ENCODE measurements at regions of chr7 and their contacts with region 1.

Region 1: GRCh38 chr7:22255834-22256233 is 101.1 kb downstream of the RAPGEF5 start:
- DNase-seq: no peak
- H3K4me3 ChIP-seq: no peak overlapping the region
- H3K27ac ChIP-seq: no peak overlapping the region
- H3K4me1 ChIP-seq: no peaks in the 10 kb centered on the region
- H3K27me3 ChIP-seq: no peaks in the 10 kb centered on the region
- CTCF ChIP-seq: no peak
- POLR2A ChIP-seq: no peak

Region 2: DNA sequence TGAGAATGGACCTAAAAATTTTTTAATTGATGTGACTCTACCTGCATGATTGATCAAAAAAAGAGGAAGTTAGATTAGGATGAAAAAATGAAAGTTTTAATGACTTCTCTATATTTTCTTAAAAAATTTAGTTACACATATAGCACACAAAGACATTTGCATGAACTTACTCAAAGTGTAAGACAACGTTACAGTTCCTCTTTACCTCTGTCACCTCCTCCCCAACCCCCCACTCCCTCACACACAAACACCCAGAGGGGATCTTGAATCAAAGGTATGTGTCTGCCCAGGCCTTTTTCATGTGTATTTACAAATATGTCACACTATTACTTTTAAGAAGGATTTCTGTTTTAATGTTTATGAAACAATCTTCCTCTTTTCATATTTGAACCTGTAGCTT is 289.6 kb before region 1 on chr7:
- intact Hi-C with region 1: no loop called
- DNase-seq: no peak
- H3K4me3 ChIP-seq: no peak overlapping the region
- H3K27ac ChIP-seq: no peak overlapping the region
- H3K4me1 ChIP-seq: no peaks in the 10 kb centered on the region
- H3K27me3 ChIP-seq: no peaks in the 10 kb centered on the region
- CTCF ChIP-seq: no peak
- POLR2A ChIP-seq: no peak

Region 3: DNA sequence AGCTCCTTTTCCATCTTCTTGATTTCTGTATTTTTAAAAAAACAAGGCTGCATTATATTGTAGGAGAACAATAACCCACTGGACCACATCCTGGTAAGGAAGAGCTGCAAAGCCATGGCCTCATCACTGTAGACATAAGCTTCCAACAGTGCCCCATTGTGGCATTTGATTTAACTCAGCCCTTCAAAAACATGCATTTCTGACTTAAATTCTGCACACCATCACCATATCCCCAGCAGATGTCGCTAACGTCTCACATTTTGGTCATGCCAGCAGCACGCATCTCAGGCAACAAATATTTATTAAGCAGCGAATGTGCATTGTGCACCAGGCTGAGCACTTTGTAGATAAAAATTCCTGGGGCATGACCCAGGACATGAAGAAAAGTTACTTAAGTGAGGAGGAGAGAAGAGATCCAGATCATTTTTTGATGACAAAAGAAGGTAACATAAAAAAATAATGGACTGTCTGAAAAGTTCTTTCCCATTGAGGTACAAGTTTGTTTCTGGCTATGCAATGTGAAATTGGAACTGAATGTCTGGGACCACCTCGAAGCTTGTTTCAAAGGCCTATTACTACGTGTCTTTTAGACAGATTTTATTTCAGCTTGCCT is 145.5 kb before region 1 on chr7:
- intact Hi-C with region 1: loop called (anchors 5 kb)
- DNase-seq: peak; percentile 89
- H3K4me3 ChIP-seq: no peak overlapping the region
- H3K27ac ChIP-seq: no peak overlapping the region
- H3K4me1 ChIP-seq: no peaks in the 10 kb centered on the region
- H3K27me3 ChIP-seq: no peaks in the 10 kb centered on the region
- CTCF ChIP-seq: peak; percentile 72 to 97 (median 88)
- POLR2A ChIP-seq: no peak

Region 4: GRCh38 chr7:22361795-22362194 is 106.0 kb after region 1 on chr7:
- intact Hi-C with region 1: no loop called
- DNase-seq: peak; percentile 44
- H3K4me3 ChIP-seq: no peak overlapping the region
- H3K27ac ChIP-seq: no peak overlapping the region
- H3K4me1 ChIP-seq: peaks cover 5% of the 10 kb centered on the region
- H3K27me3 ChIP-seq: no peaks in the 10 kb centered on the region
- CTCF ChIP-seq: no peak
- POLR2A ChIP-seq: no peak

Region 5: GRCh38 chr7:22387583-22387982 is 131.7 kb after region 1 on chr7:
- intact Hi-C with region 1: no loop called
- DNase-seq: peak; percentile 64
- H3K4me3 ChIP-seq: no peak overlapping the region
- H3K27ac ChIP-seq: peak overlapping the region in 1 of 2 donors; percentile 62
- H3K4me1 ChIP-seq: peaks cover 6% of the 10 kb centered on the region
- H3K27me3 ChIP-seq: no peaks in the 10 kb centered on the region
- CTCF ChIP-seq: no peak
- POLR2A ChIP-seq: no peak

Region 6: DNA sequence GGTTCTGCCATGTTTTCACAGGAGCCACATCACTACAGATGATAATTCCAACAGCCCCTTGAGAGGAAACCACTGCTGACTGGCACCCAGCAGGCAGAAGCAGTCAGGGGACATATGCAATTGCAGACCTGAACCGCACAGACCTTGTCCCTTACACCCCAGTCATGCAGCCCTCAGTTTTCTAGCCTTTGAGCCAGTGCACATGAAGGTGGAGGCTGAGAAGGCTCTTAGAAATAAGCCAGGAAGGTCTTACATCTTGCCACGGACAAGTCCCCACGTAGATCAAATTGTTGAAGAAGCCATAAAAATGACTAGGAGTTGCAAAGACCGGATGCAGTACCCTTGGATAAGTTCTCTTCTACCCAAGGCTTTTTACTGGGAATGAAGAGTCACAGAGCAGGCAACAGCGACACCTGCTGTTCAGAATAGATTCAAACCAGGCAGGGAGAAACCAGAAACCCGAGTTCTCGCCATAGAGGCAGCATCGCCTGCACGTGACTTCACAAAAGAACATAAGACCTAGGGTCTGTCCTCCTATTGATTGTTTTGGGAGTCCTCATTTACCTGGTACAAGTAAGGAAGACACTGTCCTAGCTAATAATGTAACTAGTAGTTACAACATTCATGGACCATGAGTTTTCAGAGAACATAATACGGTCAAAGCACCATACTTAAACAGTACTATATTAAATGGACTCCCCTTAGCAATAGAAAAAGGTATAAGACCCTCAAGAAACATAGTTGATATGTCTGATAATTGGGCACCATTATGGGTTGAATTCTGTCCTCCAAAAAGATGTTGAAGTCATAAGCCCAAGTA is 233.0 kb after region 1 on chr7:
- intact Hi-C with region 1: loop called (anchors 10 kb)
- DNase-seq: peak; percentile 83
- H3K4me3 ChIP-seq: no peak overlapping the region
- H3K27ac ChIP-seq: no peak overlapping the region
- H3K4me1 ChIP-seq: no peaks in the 10 kb centered on the region
- H3K27me3 ChIP-seq: no peaks in the 10 kb centered on the region
- CTCF ChIP-seq: peak; percentile 80 to 88 (median 87)
- POLR2A ChIP-seq: no peak